CD4-positive, alpha-beta memory T cell (primary cell): ENCODE measurements at regions of chr19 and their contacts with region 1.

Region 1: GRCh38 chr19:55503502-55504251 is 15.4 kb downstream of the SSC5D start:
- DNase-seq: peak; percentile 85 to 96 (median 92)
- H3K4me3 ChIP-seq: peak overlapping the region; percentile 17 to 73
- H3K4me3 Mint-ChIP-seq: peak overlapping the region; percentile 81 to 90 (median 83)
- H3K27ac ChIP-seq: peak overlapping the region; percentile 46
- H3K27ac Mint-ChIP-seq: peak overlapping the region; percentile 75 to 92 (median 84)
- H3K4me1 ChIP-seq: peaks cover 4% of the 10 kb centered on the region
- H3K4me1 Mint-ChIP-seq: peaks cover 5 to 13% (median 10%) of the 10 kb centered on the region in 4 donors
- H3K27me3 ChIP-seq: no peaks in the 10 kb centered on the region
- H3K27me3 Mint-ChIP-seq: peaks cover 6% of the 10 kb centered on the region in 2 donors

Region 2: DNA sequence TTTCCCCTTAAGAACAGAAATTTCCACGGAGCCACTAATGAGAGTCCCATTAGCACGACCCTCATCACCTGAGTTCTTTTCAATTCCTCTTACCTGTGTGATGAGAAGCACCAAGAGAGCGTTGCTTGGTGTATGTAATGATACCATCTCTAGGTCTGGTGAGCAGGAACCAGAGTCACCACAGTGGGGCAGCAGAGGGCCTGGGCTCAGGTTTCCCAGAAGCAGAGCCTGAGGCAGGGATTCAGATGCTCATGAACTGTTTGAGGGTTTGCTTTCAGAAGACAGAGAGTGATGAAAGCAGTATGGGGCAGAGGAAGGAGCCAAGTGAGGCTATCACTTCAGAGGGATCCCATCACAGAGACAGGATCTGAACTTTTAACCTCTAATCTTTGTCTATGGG is 291.2 kb before region 1 on chr19:
- CTCF ChIA-PET with region 1: interaction called, 3 read pairs
- POLR2A ChIA-PET with region 1: no interaction called
- intact Hi-C with region 1: loop called (anchors 1 kb)
- DNase-seq: peak in 4 of 5 donors; percentile 12 to 21 (median 16)
- H3K4me3 ChIP-seq: no peak overlapping the region
- H3K4me3 Mint-ChIP-seq: no peak overlapping the region
- H3K27ac ChIP-seq: no peak overlapping the region
- H3K27ac Mint-ChIP-seq: no peak overlapping the region
- H3K4me1 ChIP-seq: peaks cover 11% of the 10 kb centered on the region
- H3K4me1 Mint-ChIP-seq: peaks cover 3 to 16% (median 6%) of the 10 kb centered on the region in 4 donors
- H3K27me3 ChIP-seq: no peaks in the 10 kb centered on the region
- H3K27me3 Mint-ChIP-seq: peaks cover 21 to 32% of the 10 kb centered on the region in 2 donors

Region 3: GRCh38 chr19:55461259-55461973 is 42.3 kb before region 1 on chr19 and contains the start of gene ISOC2:
- CTCF ChIA-PET with region 1: interaction called, 69 read pairs
- POLR2A ChIA-PET with region 1: interaction called, 3 read pairs
- intact Hi-C with region 1: loop called (anchors 2 kb)
- DNase-seq: peak; percentile 100
- H3K4me3 ChIP-seq: peak within 1 kb of the TSS; percentile 82 to 97
- H3K4me3 Mint-ChIP-seq: peak within 1 kb of the TSS; percentile 86 to 97 (median 92)
- H3K27ac ChIP-seq: peak within 1 kb of the TSS; percentile 67
- H3K27ac Mint-ChIP-seq: peak within 1 kb of the TSS; percentile 72 to 97 (median 91)
- H3K4me1 ChIP-seq: peaks cover 18% of the 10 kb centered on the region
- H3K4me1 Mint-ChIP-seq: peaks cover 11 to 31% (median 21%) of the 10 kb centered on the region in 4 donors
- H3K27me3 ChIP-seq: no peaks in the 10 kb centered on the region
- H3K27me3 Mint-ChIP-seq: no peaks in the 10 kb centered on the region
- total RNA-seq, gene ISOC2: 9.9 to 13.7 TPM

Region 4: DNA sequence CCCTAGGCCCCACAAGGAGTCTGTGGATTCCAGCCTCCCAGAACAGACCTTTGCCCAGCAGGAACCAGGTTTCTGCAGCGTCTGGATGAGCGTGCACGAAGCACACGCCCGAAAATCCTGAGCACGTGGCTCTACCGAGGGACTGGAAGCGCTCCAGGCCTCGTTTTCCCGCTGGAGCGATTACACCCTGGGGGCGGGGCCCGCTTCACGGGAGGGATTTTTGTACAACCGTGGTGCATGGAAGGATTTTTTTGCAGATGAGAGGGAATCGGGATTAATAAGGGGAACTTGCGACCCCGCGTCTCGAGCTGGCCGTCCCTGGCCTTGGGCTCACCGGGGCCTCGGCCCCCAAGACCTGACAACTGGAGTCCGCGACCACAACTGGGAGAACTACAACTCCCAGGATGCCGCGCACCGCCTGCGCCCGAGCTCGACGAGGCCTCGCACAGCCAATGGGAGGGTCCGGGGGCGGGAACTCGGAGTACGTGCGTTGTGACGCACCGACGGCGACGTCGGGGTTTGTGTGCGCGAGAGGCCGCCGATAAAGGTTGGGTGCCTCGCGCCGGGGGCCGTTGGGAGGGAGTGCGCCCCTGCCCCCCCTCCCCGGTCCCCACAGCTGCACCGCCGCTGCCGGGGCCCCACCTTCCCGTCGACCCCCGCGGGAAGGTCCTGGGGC is 27.4 kb before region 1 on chr19 and contains the start of gene ZNF628:
- CTCF ChIA-PET with region 1: interaction called, 42 read pairs
- POLR2A ChIA-PET with region 1: interaction called, 17 read pairs
- intact Hi-C with region 1: no loop called
- DNase-seq: peak; percentile 97 to 98 (median 97)
- H3K4me3 ChIP-seq: peak within 1 kb of the TSS; percentile 65 to 84
- H3K4me3 Mint-ChIP-seq: peak within 1 kb of the TSS; percentile 88 to 93 (median 90)
- H3K27ac ChIP-seq: peak within 1 kb of the TSS; percentile 71
- H3K27ac Mint-ChIP-seq: peak within 1 kb of the TSS; percentile 90 to 97 (median 94)
- H3K4me1 ChIP-seq: peaks cover 22% of the 10 kb centered on the region
- H3K4me1 Mint-ChIP-seq: peaks cover 19 to 42% (median 29%) of the 10 kb centered on the region in 4 donors
- H3K27me3 ChIP-seq: no peaks in the 10 kb centered on the region
- H3K27me3 Mint-ChIP-seq: no peaks in the 10 kb centered on the region
- total RNA-seq, gene ZNF628: 8.1 to 9.1 TPM

Region 5: DNA sequence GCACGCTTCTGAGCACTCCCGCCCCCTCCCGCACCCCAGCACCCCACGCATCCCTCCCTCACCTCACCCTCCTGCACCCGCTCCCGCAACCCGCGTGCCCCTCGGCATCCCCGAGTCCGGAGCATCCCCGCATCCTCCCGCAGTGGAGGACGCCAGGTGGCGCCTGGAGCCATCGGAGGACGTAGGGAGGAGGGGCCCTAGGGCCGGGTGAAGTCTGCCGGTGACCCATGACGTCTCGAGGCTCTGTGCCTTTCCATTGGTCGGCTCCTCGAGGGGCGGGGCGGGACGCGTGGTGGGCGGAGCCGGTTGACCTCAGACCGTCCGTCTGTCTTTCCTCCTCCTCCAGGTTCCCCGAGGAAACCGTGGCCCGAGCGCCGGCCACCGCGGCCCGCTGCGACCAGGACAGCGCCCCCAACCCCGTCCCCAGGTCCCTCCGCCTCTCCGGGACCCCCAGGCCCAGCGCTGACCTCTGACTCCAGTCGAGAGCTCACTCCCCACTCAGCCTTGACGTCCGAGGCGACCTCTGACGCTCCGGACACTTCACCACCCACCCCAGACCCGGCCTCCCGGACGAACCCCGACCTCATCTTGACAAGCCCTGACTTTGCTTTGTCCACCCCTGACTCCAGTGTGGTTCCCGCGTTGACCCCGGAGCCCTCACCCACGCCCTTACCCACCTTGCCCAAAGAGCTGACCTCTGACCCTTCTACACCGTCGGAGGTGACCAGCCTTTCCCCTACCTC is 13.4 kb after region 1 on chr19:
- CTCF ChIA-PET with region 1: interaction called, 17 read pairs
- POLR2A ChIA-PET with region 1: interaction called, 4 read pairs
- intact Hi-C with region 1: no loop called
- DNase-seq: peak; percentile 85 to 86 (median 86)
- H3K4me3 ChIP-seq: peak overlapping the region in 1 of 2 donors; percentile 38
- H3K4me3 Mint-ChIP-seq: peak overlapping the region; percentile 71 to 86 (median 82)
- H3K27ac ChIP-seq: peak overlapping the region; percentile 42
- H3K27ac Mint-ChIP-seq: peak overlapping the region; percentile 77 to 97 (median 92)
- H3K4me1 ChIP-seq: peaks cover 6% of the 10 kb centered on the region
- H3K4me1 Mint-ChIP-seq: peaks cover 3 to 4% (median 3%) of the 10 kb centered on the region in 4 donors
- H3K27me3 ChIP-seq: no peaks in the 10 kb centered on the region
- H3K27me3 Mint-ChIP-seq: peaks cover 1 to 11% of the 10 kb centered on the region in 2 donors

Region 6: DNA sequence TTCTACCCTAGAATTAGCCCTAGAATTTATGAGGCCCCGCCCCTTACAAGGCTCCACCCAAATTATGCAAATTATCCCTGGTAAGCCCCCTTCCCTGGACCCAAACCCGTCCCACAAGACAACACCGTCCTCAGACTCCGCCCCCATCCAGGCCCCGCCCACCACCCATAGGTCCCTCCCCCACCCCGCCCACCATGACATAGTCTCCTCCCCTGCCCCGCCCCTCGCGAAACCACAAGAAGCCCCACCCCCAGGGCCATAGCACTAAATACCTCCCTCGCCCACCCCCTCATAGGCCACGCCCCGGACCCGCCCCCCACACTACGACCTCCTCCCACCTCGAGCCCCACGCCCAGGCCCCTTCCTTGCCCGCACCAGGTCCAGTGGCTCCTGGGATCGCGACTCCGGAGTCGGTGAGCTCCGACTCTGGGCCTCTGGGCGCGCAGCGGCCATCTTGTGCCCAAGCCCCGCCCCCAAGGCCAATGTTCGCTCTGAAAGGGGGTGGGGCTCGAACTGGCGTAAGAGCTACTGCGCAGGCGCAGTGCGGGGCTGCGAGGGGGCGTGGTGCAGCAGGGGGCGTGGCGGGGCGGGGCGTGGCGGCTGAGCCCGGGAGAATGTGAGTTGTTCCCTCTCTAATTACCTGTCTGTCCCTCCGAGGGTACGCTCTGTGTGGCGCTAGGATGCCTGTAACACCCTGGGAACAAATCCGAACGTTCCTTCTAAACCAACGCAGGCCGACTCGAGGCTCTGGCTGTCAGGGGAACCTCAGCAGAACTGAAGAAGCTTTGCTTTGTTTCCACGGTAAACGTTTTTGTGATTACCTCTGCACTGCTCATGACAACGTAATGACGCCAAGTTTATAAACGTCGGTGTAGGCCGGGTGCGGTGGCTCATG is 120.7 kb after region 1 on chr19 and contains the start of gene ZNF784:
- CTCF ChIA-PET with region 1: interaction called, 25 read pairs
- POLR2A ChIA-PET with region 1: interaction called, 3 read pairs
- intact Hi-C with region 1: no loop called
- DNase-seq: peak; percentile 90 to 94 (median 93)
- H3K4me3 ChIP-seq: peak within 1 kb of the TSS; percentile 57 to 64
- H3K4me3 Mint-ChIP-seq: peak within 1 kb of the TSS; percentile 88 to 96 (median 90)
- H3K27ac ChIP-seq: peak within 1 kb of the TSS; percentile 88
- H3K27ac Mint-ChIP-seq: peak within 1 kb of the TSS; percentile 96 to 99 (median 98)
- H3K4me1 ChIP-seq: peaks cover 38% of the 10 kb centered on the region
- H3K4me1 Mint-ChIP-seq: peaks cover 30 to 57% (median 42%) of the 10 kb centered on the region in 4 donors
- H3K27me3 ChIP-seq: no peaks in the 10 kb centered on the region
- H3K27me3 Mint-ChIP-seq: no peaks in the 10 kb centered on the region
- total RNA-seq, gene ZNF784: 7.4 TPM

Region 7: DNA sequence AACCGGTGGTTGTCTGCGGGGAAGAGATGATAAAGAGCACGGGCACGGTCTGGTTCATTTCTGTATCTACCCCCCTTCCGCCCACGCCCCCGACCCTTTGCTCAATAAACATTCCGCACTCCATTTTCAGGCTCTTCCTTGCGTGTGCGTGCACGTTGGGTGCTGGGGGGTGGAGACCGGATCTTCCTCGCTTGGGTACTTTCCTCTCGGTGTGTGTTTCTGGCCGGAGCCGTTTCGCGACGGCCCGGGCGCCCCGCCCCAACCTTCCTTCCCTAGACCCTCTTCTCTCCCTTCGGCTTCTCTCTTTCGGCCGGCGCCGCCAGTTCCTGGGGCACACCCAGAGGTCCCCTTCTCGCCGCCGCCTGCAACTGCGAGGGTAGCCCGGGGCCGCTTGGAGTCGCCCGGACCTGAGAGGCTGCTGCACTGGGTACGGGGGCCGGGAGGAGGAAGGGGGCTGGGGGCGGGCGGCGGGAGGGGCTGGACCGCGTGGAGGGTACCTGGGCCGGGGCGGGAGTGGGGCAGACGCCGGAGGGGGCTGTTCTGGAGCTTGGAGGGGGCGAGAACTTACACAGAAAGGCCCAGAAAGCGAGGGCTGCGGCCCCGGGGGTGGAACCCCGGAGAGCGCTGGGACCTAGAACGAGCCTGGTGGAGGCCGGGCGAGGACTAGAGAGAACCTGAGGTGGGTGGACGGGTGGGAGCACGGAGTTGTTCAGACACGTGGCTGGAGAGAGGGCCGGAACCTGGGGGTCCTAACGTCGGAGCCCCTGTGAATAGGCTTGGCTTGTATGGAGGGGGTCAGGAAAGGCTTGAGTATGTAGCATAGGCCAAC is 139.9 kb after region 1 on chr19 and contains the start of gene ZNF581:
- CTCF ChIA-PET with region 1: interaction called, 17 read pairs
- POLR2A ChIA-PET with region 1: no interaction called
- intact Hi-C with region 1: no loop called
- DNase-seq: peak; percentile 77 to 85 (median 79)
- H3K4me3 ChIP-seq: peak within 1 kb of the TSS; percentile 53 to 83
- H3K4me3 Mint-ChIP-seq: peak within 1 kb of the TSS; percentile 86 to 96 (median 92)
- H3K27ac ChIP-seq: peak within 1 kb of the TSS; percentile 69
- H3K27ac Mint-ChIP-seq: peak within 1 kb of the TSS; percentile 87 to 99 (median 94)
- H3K4me1 ChIP-seq: peaks cover 49% of the 10 kb centered on the region
- H3K4me1 Mint-ChIP-seq: peaks cover 29 to 62% (median 45%) of the 10 kb centered on the region in 4 donors
- H3K27me3 ChIP-seq: no peaks in the 10 kb centered on the region
- H3K27me3 Mint-ChIP-seq: no peaks in the 10 kb centered on the region
- total RNA-seq, gene ZNF581: 21.2 to 23.4 TPM